ENCODE measurements at regions of chr4 and their contacts with region 1.

Region 1: GRCh38 chr4:24209891-24210290 is 320.0 kb upstream of the PPARGC1A start:
- DNase-seq: no peak
- ATAC-seq: no peak
- H3K4me3 ChIP-seq: no peak overlapping the region
- H3K27ac ChIP-seq: peak overlapping the region in 1 of 10 donors; percentile 54
- H3K4me1 ChIP-seq: peaks cover 0 to 5% (median 0%) of the 10 kb centered on the region in 9 donors
- H3K27me3 ChIP-seq: no peaks in the 10 kb centered on the region
- CTCF ChIP-seq: no peak

Region 2: DNA sequence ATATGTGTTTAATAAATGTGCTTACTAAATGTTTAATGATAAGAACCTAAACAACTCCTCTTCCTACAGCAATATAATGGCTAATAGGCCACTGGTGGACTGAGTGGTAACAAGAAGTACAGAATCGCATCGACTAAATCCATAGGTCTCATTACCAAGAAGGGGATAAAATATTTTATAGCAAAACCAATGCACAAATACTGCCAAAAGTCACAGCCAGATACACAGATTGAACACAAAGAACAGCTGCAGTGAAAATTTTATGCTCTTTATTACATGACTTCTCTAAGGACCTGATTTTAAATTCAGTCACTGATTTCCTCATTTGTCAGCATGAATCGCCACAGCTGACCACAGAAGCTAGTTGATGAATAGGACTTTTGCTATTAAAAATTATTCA is 89.0 kb after region 1 on chr4:
- intact Hi-C with region 1: loop called in 1 of 10 experiments (anchors 10 kb)
- DNase-seq: no peak
- ATAC-seq: no peak
- H3K4me3 ChIP-seq: no peak overlapping the region
- H3K27ac ChIP-seq: no peak overlapping the region
- H3K4me1 ChIP-seq: no peaks in the 10 kb centered on the region
- H3K27me3 ChIP-seq: no peaks in the 10 kb centered on the region
- CTCF ChIP-seq: no peak

Measured in heart right ventricle (tissue), 16 donors.